Ovary (tissue), 10 donors: ENCODE measurements at regions of chr9 and their contacts with region 1.

Region 1: DNA sequence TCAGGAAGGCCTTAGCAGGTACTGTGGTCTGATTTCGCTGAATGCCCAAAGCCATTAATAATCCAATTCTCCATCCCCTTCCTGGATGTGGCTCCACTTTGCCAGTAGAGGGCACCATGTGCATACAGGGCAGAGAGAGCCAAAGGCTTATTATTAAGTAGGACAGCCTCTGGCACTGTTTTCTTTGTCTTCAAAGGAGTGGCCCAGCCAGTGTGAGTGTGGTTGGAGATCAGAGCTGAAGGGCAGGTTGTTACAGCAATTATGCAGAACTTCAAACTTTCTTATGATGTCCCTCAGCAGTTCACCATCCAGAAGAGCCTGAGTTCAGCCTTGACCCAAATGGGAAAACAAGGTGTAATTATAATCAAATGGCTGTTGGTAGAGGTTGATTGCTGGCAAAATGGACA is 38.6 kb upstream of the CEMIP2 start:
- DNase-seq: peak in 4 of 5 donors; percentile 21 to 50 (median 30)
- H3K4me3 ChIP-seq: no peak overlapping the region
- H3K27ac ChIP-seq: no peak overlapping the region
- H3K4me1 ChIP-seq: no peaks in the 10 kb centered on the region
- H3K27me3 ChIP-seq: no peaks in the 10 kb centered on the region
- CTCF ChIP-seq: peak in 2 of 3 donors; percentile 16 to 19
- EP300 ChIP-seq: no peak
- POLR2A ChIP-seq: no peak

Region 2: GRCh38 chr9:71911253-71912074 is 104.6 kb after region 1 on chr9 and contains the start of gene C9orf85:
- intact Hi-C with region 1: no loop called
- DNase-seq: peak; percentile 97 to 99 (median 98)
- H3K4me3 ChIP-seq: peak within 1 kb of the TSS; percentile 68
- H3K27ac ChIP-seq: peak within 1 kb of the TSS; percentile 63 to 90
- H3K4me1 ChIP-seq: peaks cover 3% of the 10 kb centered on the region
- H3K27me3 ChIP-seq: no peaks in the 10 kb centered on the region
- CTCF ChIP-seq: no peak
- EP300 ChIP-seq: no peak
- POLR2A ChIP-seq: no peak
- total RNA-seq, gene C9orf85: 8.6 to 13.0 (median 10.2) TPM

Region 3: DNA sequence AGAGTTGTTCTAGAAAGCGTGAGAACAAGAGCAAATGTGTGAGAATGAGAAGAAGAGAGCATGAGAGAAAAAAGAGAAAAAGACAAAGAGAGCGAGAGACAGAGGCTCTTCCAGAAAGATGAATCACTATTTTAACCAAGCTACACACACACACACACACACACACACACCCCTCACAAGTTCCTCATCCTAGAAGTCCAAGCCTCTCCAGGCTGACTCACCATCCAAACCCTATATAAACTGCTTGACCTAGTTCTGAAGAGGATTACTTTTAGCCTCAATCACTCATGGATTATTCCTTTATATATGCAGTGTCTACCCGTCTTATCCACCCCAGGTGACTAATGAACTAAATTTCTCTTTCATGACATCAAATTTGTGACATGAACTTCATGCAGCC is 215.9 kb after region 1 on chr9:
- intact Hi-C with region 1: loop called in 2 of 4 experiments (anchors 10 kb)
- DNase-seq: no peak
- H3K4me3 ChIP-seq: no peak overlapping the region
- H3K27ac ChIP-seq: no peak overlapping the region
- H3K4me1 ChIP-seq: no peaks in the 10 kb centered on the region
- H3K27me3 ChIP-seq: no peaks in the 10 kb centered on the region
- CTCF ChIP-seq: no peak
- EP300 ChIP-seq: no peak
- POLR2A ChIP-seq: no peak